Aorta (tissue), 5 donors: ENCODE measurements at regions of chr9 and their contacts with region 1.

Region 1: GRCh38 chr9:120868676-120869359 is 8.2 kb downstream of the PHF19 start:
- DNase-seq: peak; percentile 98 to 99
- ATAC-seq: peak; percentile 97
- H3K4me3 ChIP-seq: peak overlapping the region in 1 of 2 donors; percentile 56
- H3K27ac ChIP-seq: peak overlapping the region in 1 of 2 donors; percentile 58
- H3K4me1 ChIP-seq: no peaks in the 10 kb centered on the region
- H3K27me3 ChIP-seq: no peaks in the 10 kb centered on the region

Region 2: GRCh38 chr9:120925535-120926396 is 56.9 kb after region 1 on chr9:
- intact Hi-C with region 1: no loop called
- DNase-seq: peak; percentile 87 to 90
- ATAC-seq: peak; percentile 65
- H3K4me3 ChIP-seq: peak overlapping the region in 1 of 2 donors; percentile 16
- H3K27ac ChIP-seq: peak overlapping the region; percentile 91 to 97
- H3K4me1 ChIP-seq: peaks cover 0 to 6% of the 10 kb centered on the region in 2 donors
- H3K27me3 ChIP-seq: no peaks in the 10 kb centered on the region

Region 3: DNA sequence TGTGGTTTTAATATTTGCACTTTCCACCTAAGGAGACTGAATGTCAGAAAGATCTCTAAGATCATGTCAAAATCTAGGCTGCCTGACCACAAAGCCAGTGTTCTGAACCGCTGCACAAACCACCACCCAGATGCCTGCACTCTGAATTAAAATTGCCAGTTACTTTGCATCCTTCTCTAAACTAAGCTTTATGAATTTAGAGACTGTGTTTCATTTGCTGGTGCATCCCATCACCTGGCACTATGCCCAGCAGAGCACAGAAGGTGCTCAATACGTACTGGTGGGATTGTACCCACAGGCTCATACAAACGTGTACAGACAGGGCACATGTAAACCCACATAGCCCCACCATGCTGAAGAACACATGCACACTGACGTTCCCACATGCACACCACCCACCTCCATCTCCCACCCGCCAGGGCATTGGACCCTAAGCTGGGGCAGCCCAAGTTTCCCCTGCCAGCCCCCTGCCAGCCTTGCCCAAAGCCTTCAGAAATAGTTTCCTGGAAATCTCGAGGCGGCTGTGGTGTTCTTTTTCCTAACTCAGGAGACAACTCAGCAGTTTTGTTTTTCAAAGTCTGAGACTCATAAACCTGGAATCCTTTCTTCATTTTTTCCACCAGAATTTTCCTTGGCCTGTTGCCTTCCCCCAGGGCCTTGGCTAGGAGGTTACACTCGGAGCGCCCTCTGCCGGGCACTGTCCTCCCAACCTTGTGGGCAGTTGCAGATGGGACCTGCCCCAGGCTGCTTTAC is 67.4 kb after region 1 on chr9:
- intact Hi-C with region 1: loop called in 1 of 2 experiments (anchors 5 kb)
- DNase-seq: peak; percentile 96 to 99
- ATAC-seq: peak; percentile 91
- H3K4me3 ChIP-seq: no peak overlapping the region
- H3K27ac ChIP-seq: peak overlapping the region; percentile 90 to 100
- H3K4me1 ChIP-seq: peaks cover 10% of the 10 kb centered on the region in 2 donors
- H3K27me3 ChIP-seq: no peaks in the 10 kb centered on the region

Region 4: DNA sequence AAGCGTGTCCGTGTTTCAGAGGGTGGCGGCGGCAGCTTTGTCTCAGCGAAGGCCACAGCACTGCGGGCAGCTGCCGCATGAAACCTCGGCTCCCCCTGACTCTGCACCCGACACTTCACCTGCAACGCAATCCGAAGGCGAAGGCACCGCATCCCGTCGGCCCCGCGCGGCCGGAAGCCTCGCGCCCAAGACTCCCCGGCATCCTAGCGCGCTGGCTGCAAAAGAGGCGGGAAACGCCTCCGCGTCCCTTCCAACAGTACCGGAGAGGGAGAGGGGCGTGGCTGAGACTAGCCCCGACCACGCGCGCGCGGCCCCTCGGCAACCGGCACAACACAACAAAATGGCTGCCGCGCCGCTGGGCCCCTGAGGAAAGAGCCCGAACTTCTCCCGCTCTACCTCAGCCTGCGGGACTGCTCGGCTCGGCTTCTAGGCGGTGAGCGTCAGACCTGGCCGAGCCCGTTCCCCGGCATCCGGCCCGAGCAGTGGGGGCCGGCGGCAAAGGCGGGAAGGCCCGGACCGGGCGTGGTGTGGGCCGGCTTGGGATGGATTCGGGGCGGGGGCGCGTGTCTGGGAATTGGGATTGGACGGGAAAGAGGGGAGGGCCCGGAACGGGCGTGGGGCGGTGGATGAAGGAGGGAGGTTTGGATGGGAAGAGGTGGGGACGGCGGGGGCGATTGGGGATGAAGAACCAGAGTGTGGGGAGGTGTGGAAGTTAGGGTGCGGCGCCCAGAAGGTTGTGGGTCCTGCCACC is 206.0 kb after region 1 on chr9 and contains the start of gene CNTRL:
- intact Hi-C with region 1: loop called in 1 of 2 experiments (anchors 5 kb)
- DNase-seq: peak; percentile 95 to 97
- ATAC-seq: peak; percentile 96
- H3K4me3 ChIP-seq: peak within 1 kb of the TSS; percentile 60 to 67
- H3K27ac ChIP-seq: peak within 1 kb of the TSS in 1 of 2 donors; percentile 79
- H3K4me1 ChIP-seq: no peaks in the 10 kb centered on the region
- H3K27me3 ChIP-seq: no peaks in the 10 kb centered on the region
- total RNA-seq, gene CNTRL: 18.9 to 25.8 TPM